Activated naive CD4-positive, alpha-beta T cell treated with anti-CD3 and anti-CD28 coated beads for 36 hours (primary cell): ENCODE measurements at regions of chr4 and their contacts with region 1.

Region 1: DNA sequence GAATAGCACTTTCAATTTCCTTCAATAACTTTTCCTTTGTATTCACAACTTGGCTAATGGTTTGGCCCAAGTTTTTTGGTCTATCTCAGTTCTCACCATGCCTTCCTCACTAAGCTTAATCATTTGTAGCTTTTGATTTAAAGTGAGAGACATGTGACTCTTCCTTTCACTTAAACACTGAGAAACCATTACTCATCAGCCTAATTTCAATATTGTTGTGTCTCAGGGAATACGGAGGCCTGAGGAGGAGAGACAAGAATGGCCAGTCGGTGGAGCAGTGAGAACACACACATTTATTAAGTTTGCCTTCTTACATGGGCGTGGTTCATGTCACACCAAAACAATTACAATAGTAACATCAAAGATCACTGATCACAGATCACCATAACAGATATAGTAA is 56.7 kb downstream of the TSPAN5 start:
- DNase-seq: peak; percentile 63
- H3K4me3 Mint-ChIP-seq: peak overlapping the region; percentile 41
- H3K27ac Mint-ChIP-seq: peak overlapping the region; percentile 84
- H3K4me1 Mint-ChIP-seq: peaks cover 46% of the 10 kb centered on the region
- H3K27me3 Mint-ChIP-seq: no peaks in the 10 kb centered on the region

Region 2: DNA sequence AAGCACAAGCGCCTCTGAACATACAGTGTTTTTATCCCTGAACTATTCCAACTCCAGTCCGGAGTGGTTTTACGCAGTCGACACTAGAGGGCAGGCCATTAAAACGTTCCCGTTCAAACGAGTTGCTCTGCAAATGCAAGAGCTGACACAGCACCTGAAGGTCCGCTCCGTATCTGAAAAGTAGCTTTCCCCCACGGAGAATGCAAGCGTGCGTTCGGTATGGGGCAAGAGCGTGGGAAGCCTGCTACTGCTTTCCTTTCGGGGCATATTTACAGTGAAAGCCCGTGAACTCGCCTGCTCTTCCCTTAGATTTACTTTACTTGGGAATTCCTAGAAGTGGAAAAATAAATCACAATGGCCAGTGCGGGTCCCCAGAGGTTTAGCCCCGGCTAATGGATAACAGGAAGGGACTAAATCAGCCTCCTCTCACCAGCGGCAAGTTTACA is 134.1 kb before region 1 on chr4:
- CTCF ChIA-PET with region 1: interaction called, 5 read pairs
- intact Hi-C with region 1: loop called (anchors 5 kb)
- DNase-seq: peak; percentile 85
- H3K4me3 Mint-ChIP-seq: peak overlapping the region; percentile 65
- H3K27ac Mint-ChIP-seq: no peak overlapping the region
- H3K4me1 Mint-ChIP-seq: peaks cover 16% of the 10 kb centered on the region
- H3K27me3 Mint-ChIP-seq: no peaks in the 10 kb centered on the region

Region 3: GRCh38 chr4:98522636-98523395 is 78.9 kb before region 1 on chr4:
- CTCF ChIA-PET with region 1: no interaction called
- intact Hi-C with region 1: loop called (anchors 1 kb)
- DNase-seq: peak; percentile 35
- H3K4me3 Mint-ChIP-seq: no peak overlapping the region
- H3K27ac Mint-ChIP-seq: peak overlapping the region; percentile 14
- H3K4me1 Mint-ChIP-seq: peaks cover 49% of the 10 kb centered on the region
- H3K27me3 Mint-ChIP-seq: no peaks in the 10 kb centered on the region

Region 4: DNA sequence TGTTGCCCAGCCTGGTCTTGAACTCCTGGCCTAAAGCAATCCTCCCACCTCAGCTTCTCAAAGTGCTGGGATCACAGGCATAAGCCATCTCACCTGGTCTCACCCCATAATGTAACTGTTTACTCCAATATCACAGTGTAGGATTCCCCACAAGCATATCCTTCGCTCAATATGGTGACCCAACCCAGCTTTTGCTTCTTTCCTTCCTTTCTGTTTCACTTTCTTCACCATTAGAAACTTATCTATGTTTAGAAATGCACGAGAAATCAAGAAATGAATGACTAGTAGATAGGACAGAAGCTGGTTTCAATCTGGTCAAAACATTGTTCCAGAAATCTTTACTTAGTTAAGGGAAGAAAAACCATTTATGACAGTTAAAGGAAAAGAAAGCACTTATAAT is 37.8 kb after region 1 on chr4:
- CTCF ChIA-PET with region 1: no interaction called
- intact Hi-C with region 1: loop called (anchors 1 kb)
- DNase-seq: no peak
- H3K4me3 Mint-ChIP-seq: peak overlapping the region; percentile 16
- H3K27ac Mint-ChIP-seq: peak overlapping the region; percentile 33
- H3K4me1 Mint-ChIP-seq: peaks cover 46% of the 10 kb centered on the region
- H3K27me3 Mint-ChIP-seq: no peaks in the 10 kb centered on the region

Region 5: DNA sequence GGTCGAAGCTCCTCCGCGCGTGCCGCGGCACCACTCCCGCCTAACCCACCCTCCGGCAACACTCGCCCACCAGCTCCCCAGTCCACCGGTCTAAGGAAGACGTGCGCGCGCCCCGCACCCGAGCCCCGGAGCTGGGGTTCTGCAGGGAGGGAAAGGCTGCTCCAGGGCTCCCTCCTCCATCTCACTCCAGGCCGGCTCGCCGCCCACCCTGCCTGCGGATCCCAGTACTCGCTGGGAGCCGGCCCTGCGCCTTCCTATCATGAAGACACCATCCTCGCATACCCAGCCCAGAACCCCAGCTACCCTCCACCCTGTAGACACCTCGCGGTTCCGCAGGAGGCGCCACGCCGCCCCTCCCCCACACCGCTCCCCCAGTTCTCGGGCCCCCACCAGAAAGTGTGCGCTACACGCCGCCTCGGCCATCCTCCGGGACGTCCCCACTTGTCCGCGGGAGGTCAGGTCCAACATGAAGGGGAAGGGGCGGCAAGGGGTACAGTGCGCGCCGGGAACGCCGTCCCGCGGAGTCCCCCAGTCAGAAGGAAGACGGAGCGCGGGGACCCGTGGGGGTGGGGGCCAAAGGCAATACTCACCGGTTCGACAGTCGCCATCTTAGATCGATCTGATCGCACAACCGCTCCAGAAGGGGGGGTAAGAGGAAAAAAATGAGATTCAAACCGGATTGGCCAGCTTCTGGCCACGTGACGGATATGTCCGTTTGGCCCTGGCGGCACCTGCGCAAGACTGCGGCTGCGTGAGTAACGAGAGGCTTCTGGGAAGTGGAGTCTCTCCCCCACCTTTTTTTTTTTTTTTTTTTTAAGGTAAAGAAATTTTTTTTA is 327.0 kb after region 1 on chr4 and contains the start of gene EIF4E:
- CTCF ChIA-PET with region 1: no interaction called
- intact Hi-C with region 1: loop called (anchors 1 kb)
- DNase-seq: peak; percentile 98
- H3K4me3 Mint-ChIP-seq: peak within 1 kb of the TSS; percentile 87
- H3K27ac Mint-ChIP-seq: peak within 1 kb of the TSS; percentile 99
- H3K4me1 Mint-ChIP-seq: peaks cover 39% of the 10 kb centered on the region
- H3K27me3 Mint-ChIP-seq: no peaks in the 10 kb centered on the region
- total RNA-seq, gene EIF4E: 104 to 116 TPM

Region 6: GRCh38 chr4:99847362-99847976 is 1245.8 kb after region 1 on chr4:
- CTCF ChIA-PET with region 1: no interaction called
- intact Hi-C with region 1: loop called (anchors 5 kb)
- DNase-seq: peak; percentile 61
- H3K4me3 Mint-ChIP-seq: peak overlapping the region; percentile 36
- H3K27ac Mint-ChIP-seq: peak overlapping the region; percentile 90
- H3K4me1 Mint-ChIP-seq: peaks cover 76% of the 10 kb centered on the region
- H3K27me3 Mint-ChIP-seq: no peaks in the 10 kb centered on the region